Activated CD4-positive, alpha-beta T cell treated with anti-CD3 and anti-CD28 coated beads, Interleukin-2, amount 10 ng/mL, durations not matched to agents 24 days and 14 days (primary cell): ENCODE measurements at regions of chr2 and their contacts with region 1.

Region 1: DNA sequence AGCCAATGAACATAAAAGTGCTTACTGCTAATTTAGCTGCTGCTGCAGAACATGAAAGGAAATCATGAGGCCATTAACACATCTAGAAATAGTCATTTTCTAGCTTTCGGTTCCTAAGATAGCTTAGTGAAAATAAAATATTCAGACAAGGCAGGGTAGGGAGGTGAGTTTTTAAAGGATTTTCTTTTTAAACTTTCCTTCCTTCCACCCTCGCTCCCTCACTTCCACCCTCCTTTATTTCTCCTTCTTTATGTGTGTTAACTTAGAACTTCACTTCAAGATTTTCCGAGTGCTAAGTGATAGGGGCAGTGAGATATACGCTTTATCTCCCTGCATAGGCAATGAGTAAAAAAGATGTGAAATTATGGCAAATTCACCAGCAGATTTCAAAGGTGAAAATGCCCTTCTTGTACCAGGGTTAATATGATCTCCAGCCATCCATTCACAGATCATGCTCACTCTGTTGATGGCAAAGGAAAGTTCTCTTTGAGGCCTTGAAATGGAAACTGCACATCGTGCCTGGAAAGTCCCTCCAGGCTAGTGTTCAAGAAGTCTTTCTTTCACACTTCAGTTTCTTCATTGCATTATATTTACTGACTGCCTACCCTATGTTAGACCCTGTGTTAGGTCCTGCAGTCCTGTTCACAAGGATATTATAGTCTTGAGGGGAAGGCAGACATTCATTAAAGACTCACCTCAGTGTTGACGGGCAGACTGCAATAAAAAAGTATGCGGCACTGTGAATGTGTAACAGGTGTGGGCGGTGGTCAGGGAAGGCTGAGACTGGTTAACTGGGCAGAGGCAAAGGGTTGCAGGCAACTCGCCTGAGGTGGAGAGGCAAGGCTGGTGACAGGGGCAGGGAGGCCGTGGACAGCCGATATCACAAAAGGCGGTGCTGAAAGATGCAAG is 200.8 kb downstream of the PLCL1 start:
- DNase-seq: peak; percentile 79
- H3K4me3 Mint-ChIP-seq: peak overlapping the region; percentile 66
- H3K27ac Mint-ChIP-seq: peak overlapping the region; percentile 83
- H3K4me1 Mint-ChIP-seq: peaks cover 31% of the 10 kb centered on the region
- H3K27me3 Mint-ChIP-seq: no peaks in the 10 kb centered on the region

Region 2: GRCh38 chr2:197889041-197889440 is 116.1 kb before region 1 on chr2:
- intact Hi-C with region 1: loop called (anchors 1 kb)
- DNase-seq: peak; percentile 84
- H3K4me3 Mint-ChIP-seq: peak overlapping the region; percentile 64
- H3K27ac Mint-ChIP-seq: peak overlapping the region; percentile 76
- H3K4me1 Mint-ChIP-seq: peaks cover 41% of the 10 kb centered on the region
- H3K27me3 Mint-ChIP-seq: no peaks in the 10 kb centered on the region

Region 3: GRCh38 chr2:197952540-197953202 is 52.5 kb before region 1 on chr2:
- intact Hi-C with region 1: loop called (anchors 2 kb)
- DNase-seq: no peak
- H3K4me3 Mint-ChIP-seq: no peak overlapping the region
- H3K27ac Mint-ChIP-seq: no peak overlapping the region
- H3K4me1 Mint-ChIP-seq: peaks cover 8% of the 10 kb centered on the region
- H3K27me3 Mint-ChIP-seq: peaks cover 5% of the 10 kb centered on the region

Region 4: GRCh38 chr2:197975931-197976519 is 29.1 kb before region 1 on chr2:
- intact Hi-C with region 1: no loop called
- DNase-seq: no peak
- H3K4me3 Mint-ChIP-seq: no peak overlapping the region
- H3K27ac Mint-ChIP-seq: no peak overlapping the region
- H3K4me1 Mint-ChIP-seq: no peaks in the 10 kb centered on the region
- H3K27me3 Mint-ChIP-seq: no peaks in the 10 kb centered on the region

Region 5: DNA sequence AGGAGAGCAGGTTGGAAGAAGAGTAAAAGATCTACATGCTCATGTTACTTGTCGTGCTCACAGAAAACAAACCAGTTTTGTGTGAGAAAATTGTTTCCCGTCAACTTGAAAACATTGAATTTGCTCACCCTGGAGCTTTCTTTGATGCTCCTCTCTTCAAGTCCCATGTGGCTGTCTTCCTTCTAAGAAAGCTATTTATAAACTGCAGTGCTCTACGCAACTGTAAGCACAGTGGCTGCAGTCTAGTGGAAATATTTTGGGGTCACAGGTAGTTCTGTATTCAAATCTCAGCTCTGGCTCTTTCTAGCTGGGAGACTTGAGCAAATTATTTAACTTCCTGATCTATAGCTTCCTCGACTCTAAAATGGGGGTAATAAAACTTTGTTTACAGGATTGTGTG is 11.1 kb after region 1 on chr2:
- intact Hi-C with region 1: loop called (anchors 2 kb)
- DNase-seq: no peak
- H3K4me3 Mint-ChIP-seq: no peak overlapping the region
- H3K27ac Mint-ChIP-seq: no peak overlapping the region
- H3K4me1 Mint-ChIP-seq: peaks cover 12% of the 10 kb centered on the region
- H3K27me3 Mint-ChIP-seq: no peaks in the 10 kb centered on the region

Region 6: GRCh38 chr2:198073253-198073652 is 68.1 kb after region 1 on chr2:
- intact Hi-C with region 1: no loop called
- DNase-seq: no peak
- H3K4me3 Mint-ChIP-seq: no peak overlapping the region
- H3K27ac Mint-ChIP-seq: no peak overlapping the region
- H3K4me1 Mint-ChIP-seq: peaks cover 2% of the 10 kb centered on the region
- H3K27me3 Mint-ChIP-seq: no peaks in the 10 kb centered on the region